Vagina (tissue), 2 donors: ENCODE measurements at regions of chr7 and their contacts with region 1.

Region 1: GRCh38 chr7:141654551-141654950 is 47.4 kb downstream of the DENND11 start:
- DNase-seq: no peak
- H3K4me3 ChIP-seq: no peak overlapping the region
- H3K27ac ChIP-seq: no peak overlapping the region
- H3K4me1 ChIP-seq: no peaks in the 10 kb centered on the region
- H3K27me3 ChIP-seq: no peaks in the 10 kb centered on the region
- CTCF ChIP-seq: peak in 2 of 3 experiments; percentile 21 to 35
- POLR2A ChIP-seq: no peak

Region 2: GRCh38 chr7:141167381-141167964 is 487.1 kb before region 1 on chr7:
- intact Hi-C with region 1: no loop called
- DNase-seq: peak in 1 of 2 donors; percentile 29
- H3K4me3 ChIP-seq: no peak overlapping the region
- H3K27ac ChIP-seq: no peak overlapping the region
- H3K4me1 ChIP-seq: no peaks in the 10 kb centered on the region
- H3K27me3 ChIP-seq: no peaks in the 10 kb centered on the region
- CTCF ChIP-seq: no peak
- POLR2A ChIP-seq: no peak

Region 3: DNA sequence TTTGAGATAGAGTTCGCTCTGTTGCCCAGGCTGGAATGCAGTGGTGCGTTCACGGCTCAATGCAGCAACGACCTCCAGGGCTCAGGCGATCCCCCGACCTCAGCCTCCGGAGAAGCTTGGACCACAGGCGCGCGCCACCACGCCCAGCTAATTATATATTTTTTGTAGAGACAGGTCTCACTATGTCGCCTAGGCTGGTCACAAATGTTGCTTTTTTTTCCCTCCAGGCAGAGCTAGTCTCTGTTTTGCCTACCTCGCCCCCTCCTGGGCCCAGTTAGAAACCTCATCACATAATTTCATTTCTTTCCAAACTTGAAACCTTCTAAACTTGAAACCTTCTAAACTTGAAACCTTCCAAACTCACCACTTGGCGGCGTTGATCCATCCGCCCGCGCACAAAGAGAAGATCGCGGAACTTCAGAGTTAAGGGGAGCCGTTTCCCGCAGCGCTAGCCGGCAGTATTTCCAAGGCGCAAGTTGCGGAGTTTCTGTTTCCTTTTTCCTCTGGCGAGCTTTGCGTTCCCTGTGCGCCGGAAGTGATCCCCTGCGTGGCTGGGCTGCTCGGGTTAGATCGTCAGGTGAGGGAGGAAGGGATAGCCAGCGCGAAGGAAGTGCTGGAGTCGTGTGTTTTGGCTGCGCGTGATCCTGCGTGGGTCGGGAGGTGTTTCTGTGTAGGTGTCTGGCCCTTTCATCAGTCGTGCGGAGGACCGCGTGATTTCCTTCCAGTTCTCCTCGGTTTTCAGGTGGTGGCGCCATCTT is 83.5 kb after region 1 on chr7 and contains the start of gene SSBP1:
- intact Hi-C with region 1: loop called (anchors 10 kb)
- DNase-seq: peak; percentile 95 to 97
- H3K4me3 ChIP-seq: peak within 1 kb of the TSS; percentile 66 to 70
- H3K27ac ChIP-seq: peak within 1 kb of the TSS; percentile 74
- H3K4me1 ChIP-seq: peaks cover 34% of the 10 kb centered on the region
- H3K27me3 ChIP-seq: no peaks in the 10 kb centered on the region
- CTCF ChIP-seq: peak; percentile 48 to 93 (median 53)
- POLR2A ChIP-seq: peak in 1 of 2 donors; percentile 24
- total RNA-seq, gene SSBP1: 74.4 TPM

Region 4: GRCh38 chr7:141860207-141860606 is 205.7 kb after region 1 on chr7:
- intact Hi-C with region 1: no loop called
- DNase-seq: no peak
- H3K4me3 ChIP-seq: no peak overlapping the region
- H3K27ac ChIP-seq: no peak overlapping the region
- H3K4me1 ChIP-seq: no peaks in the 10 kb centered on the region
- H3K27me3 ChIP-seq: no peaks in the 10 kb centered on the region
- CTCF ChIP-seq: no peak
- POLR2A ChIP-seq: no peak